PC-3 (cell line): ENCODE measurements at regions of chr1 and their contacts with region 1.

Region 1: DNA sequence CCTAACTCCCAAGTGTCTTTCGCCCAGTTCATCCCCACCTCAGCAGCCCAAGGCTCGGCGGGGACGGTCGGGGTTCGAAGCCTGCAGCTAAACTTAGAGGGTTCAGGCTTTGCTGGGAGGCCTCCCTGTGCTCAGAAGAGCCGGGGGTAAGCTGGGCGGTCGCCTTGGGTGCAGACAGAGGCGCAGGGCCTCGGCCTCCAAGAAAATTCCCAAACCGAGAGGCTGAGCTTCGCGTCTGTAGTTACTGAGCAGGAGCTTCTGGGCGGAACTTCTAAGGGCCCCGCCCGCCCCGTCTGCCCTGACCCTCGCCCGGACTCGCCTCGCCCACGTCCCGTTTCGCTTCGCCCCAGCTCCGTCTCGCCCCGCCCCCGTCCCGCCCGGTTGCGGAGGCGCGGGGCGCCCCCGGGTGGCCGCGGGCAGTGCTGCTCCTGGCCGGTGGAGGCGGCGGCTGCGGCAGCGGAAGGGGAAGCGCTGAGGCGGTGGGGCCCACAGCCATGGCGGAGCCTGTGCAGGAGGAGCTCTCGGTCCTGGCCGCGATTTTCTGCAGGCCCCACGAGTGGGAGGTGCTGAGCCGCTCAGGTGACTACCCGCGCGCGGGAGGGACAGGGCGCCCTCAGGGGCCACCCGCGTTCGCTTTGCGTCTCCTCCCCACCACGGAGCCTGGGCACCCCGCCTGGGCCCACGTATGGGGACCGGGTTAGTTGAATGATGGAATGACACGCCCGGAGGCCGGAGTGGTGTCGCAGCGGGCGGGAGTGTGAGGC is at the start of gene RWDD3:
- DNase-seq: peak; percentile 95
- ATAC-seq: peak; percentile 92
- H3K4me3 ChIP-seq: peak within 1 kb of the TSS; percentile 94
- H3K27ac ChIP-seq: peak within 1 kb of the TSS; percentile 21; the same call in 1 of the 2 replicates
- H3K4me1 ChIP-seq: peaks cover 28% of the 10 kb centered on the region
- H3K27me3 ChIP-seq: no peaks in the 10 kb centered on the region
- CTCF ChIP-seq: peak; percentile 75
- total RNA-seq, gene RWDD3: 10.3 and 10.4 TPM in 2 replicates

Region 2: DNA sequence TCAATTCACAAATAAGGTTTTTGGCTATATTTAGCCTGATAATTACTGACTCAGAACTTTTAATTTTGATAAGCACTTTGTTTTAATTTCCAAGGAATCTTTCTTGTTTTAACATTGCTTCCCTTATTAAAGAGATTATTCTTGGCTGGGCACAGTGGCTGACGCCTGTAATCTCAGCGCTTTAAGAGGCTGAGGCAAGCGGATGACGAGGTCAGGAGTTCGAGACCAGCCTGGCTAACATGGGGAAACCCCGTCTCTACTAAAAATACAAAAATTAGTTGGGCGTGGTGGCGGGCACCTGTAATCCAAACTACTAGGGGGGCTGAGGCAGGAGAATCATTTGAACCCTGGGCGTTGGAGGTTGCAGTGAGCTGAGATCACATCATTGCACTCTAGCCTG is 174.9 kb before region 1 on chr1:
- CTCF ChIA-PET with region 1: interaction called, 11 read pairs
- POLR2A ChIA-PET with region 1: no interaction called
- intact Hi-C with region 1: no loop called
- DNase-seq: no peak
- ATAC-seq: no peak
- H3K4me3 ChIP-seq: no peak overlapping the region
- H3K27ac ChIP-seq: no peak overlapping the region
- H3K4me1 ChIP-seq: no peaks in the 10 kb centered on the region
- H3K27me3 ChIP-seq: no peaks in the 10 kb centered on the region
- CTCF ChIP-seq: no peak

Region 3: GRCh38 chr1:95084317-95085176 is 149.4 kb before region 1 on chr1:
- CTCF ChIA-PET with region 1: interaction called, 14 read pairs
- POLR2A ChIA-PET with region 1: no interaction called
- intact Hi-C with region 1: loop called (anchors 1 kb)
- DNase-seq: peak; percentile 77
- ATAC-seq: peak; percentile 92
- H3K4me3 ChIP-seq: no peak overlapping the region
- H3K27ac ChIP-seq: peak overlapping the region; percentile 71
- H3K4me1 ChIP-seq: peaks cover 34% of the 10 kb centered on the region
- H3K27me3 ChIP-seq: no peaks in the 10 kb centered on the region
- CTCF ChIP-seq: peak; percentile 88

Region 4: GRCh38 chr1:95116580-95117206 is 117.2 kb before region 1 on chr1:
- CTCF ChIA-PET with region 1: interaction called, 51 read pairs
- POLR2A ChIA-PET with region 1: interaction called, 5 read pairs
- intact Hi-C with region 1: loop called (anchors 1 kb)
- DNase-seq: peak; percentile 83
- ATAC-seq: peak; percentile 78
- H3K4me3 ChIP-seq: peak overlapping the region; percentile 88
- H3K27ac ChIP-seq: 0 out of 2 replicates have a peak overlapping the region, but pooled peaks have one; percentile 1
- H3K4me1 ChIP-seq: peaks cover 18% of the 10 kb centered on the region
- H3K27me3 ChIP-seq: no peaks in the 10 kb centered on the region
- CTCF ChIP-seq: peak; percentile 89

Region 5: GRCh38 chr1:95183952-95184351 is 50.0 kb before region 1 on chr1:
- CTCF ChIA-PET with region 1: no interaction called
- POLR2A ChIA-PET with region 1: no interaction called
- intact Hi-C with region 1: no loop called
- DNase-seq: no peak
- ATAC-seq: no peak
- H3K4me3 ChIP-seq: no peak overlapping the region
- H3K27ac ChIP-seq: no peak overlapping the region
- H3K4me1 ChIP-seq: no peaks in the 10 kb centered on the region
- H3K27me3 ChIP-seq: no peaks in the 10 kb centered on the region
- CTCF ChIP-seq: no peak

Region 6: GRCh38 chr1:95257758-95258157 is 23.8 kb after region 1 on chr1:
- CTCF ChIA-PET with region 1: interaction called, 10 read pairs
- POLR2A ChIA-PET with region 1: no interaction called
- intact Hi-C with region 1: loop called (anchors 1 kb)
- DNase-seq: peak; percentile 96
- ATAC-seq: peak; percentile 96
- H3K4me3 ChIP-seq: peak overlapping the region; percentile 3; the same call in 1 of the 2 replicates
- H3K27ac ChIP-seq: peak overlapping the region; percentile 76
- H3K4me1 ChIP-seq: peaks cover 30% of the 10 kb centered on the region
- H3K27me3 ChIP-seq: no peaks in the 10 kb centered on the region
- CTCF ChIP-seq: no peak

Region 7: GRCh38 chr1:95309031-95309471 is 75.1 kb after region 1 on chr1:
- CTCF ChIA-PET with region 1: no interaction called
- POLR2A ChIA-PET with region 1: no interaction called
- intact Hi-C with region 1: no loop called
- DNase-seq: peak; percentile 66
- ATAC-seq: peak; percentile 76
- H3K4me3 ChIP-seq: no peak overlapping the region
- H3K27ac ChIP-seq: no peak overlapping the region
- H3K4me1 ChIP-seq: no peaks in the 10 kb centered on the region
- H3K27me3 ChIP-seq: peaks cover 50% of the 10 kb centered on the region
- CTCF ChIP-seq: peak; percentile 80